Prostate gland (tissue), 2 donors: ENCODE measurements at regions of chr6 and their contacts with region 1.

Region 1: GRCh38 chr6:55953335-55953734 is 77.9 kb upstream of the BMP5 start:
- DNase-seq: no peak
- H3K4me3 ChIP-seq: no peak overlapping the region
- H3K27ac ChIP-seq: no peak overlapping the region
- H3K4me1 ChIP-seq: no peaks in the 10 kb centered on the region
- H3K27me3 ChIP-seq: no peaks in the 10 kb centered on the region
- CTCF ChIP-seq: peak in 3 of 4 experiments; percentile 29 to 55 (median 50)
- POLR2A ChIP-seq: no peak

Region 2: DNA sequence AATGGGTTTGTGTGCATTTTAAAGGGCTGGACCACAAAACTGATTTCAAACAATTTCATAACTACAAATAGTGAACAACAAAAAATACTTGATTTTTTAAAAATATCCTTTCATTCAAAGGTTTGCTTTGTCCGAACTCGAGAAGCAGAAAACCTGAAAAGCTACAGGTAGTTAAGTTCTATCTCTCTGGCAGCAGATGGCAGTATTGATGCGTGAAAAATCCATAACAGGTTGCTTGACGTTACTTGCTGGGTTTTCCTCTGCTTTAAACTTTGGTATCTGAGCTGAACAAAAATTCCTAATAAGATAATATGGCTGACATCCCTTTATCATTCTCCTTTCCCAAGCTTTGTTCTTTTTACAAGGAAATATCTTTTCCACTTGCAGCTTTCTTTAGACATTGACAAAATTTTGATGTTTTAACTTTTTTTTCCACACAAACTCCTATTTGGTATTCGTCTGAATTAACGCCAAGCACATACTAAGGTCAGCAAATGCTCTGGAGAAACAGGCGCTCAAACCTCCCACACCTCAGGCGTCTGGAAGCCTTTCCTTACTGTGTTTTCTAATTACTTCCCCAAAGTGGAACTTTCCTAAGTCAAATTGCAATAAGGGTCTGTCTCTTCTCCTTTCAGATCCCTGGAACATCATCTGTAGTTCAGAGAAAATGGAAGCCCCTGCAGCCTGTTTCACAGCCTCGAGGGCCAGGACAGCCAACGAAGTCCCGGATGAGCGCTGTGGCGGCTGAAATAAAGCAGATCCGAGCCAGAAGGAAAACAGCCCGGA is 676.4 kb before region 1 on chr6:
- intact Hi-C with region 1: loop called (anchors 5 kb)
- DNase-seq: peak; percentile 36
- H3K4me3 ChIP-seq: no peak overlapping the region
- H3K27ac ChIP-seq: no peak overlapping the region
- H3K4me1 ChIP-seq: no peaks in the 10 kb centered on the region
- H3K27me3 ChIP-seq: no peaks in the 10 kb centered on the region
- CTCF ChIP-seq: peak in 3 of 4 experiments; percentile 48 to 62 (median 60)
- POLR2A ChIP-seq: no peak